PC-3 (cell line): ENCODE measurements at regions of chr15 and their contacts with region 1.

Region 1: DNA sequence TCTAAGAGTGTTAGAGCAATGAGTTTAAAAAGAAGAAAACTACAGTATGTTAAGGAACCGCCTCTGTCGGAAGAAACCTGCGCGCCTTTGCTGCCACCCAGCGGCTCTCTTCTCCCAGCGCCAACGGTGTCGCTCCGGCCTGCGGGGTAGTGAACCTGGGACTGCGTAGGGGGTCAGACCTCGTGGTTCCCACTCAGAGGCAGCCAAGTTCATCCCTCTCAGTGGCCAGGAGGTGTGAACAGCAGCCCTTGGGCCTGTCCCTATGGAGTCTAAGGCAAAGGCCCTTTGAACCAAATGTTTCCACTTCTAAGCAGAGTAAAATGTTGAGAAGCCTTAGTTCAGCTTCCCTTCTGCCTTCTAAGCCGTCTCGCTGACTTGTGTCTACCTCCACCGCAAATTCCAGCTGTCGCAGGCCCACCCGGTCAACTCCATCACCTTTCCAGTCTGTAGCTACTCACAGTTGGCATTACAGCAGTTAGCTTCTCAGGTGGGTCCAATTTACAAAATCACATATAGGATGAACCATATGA is 980 bp upstream of the RAB27A start:
- DNase-seq: peak; percentile 73
- ATAC-seq: peak; percentile 87
- H3K4me3 ChIP-seq: peak overlapping the region; percentile 98
- H3K27ac ChIP-seq: peak overlapping the region; percentile 45
- H3K4me1 ChIP-seq: peaks cover 10% of the 10 kb centered on the region; the same call in 1 of the 2 replicates
- H3K27me3 ChIP-seq: no peaks in the 10 kb centered on the region
- CTCF ChIP-seq: peak; percentile 88

Region 2: DNA sequence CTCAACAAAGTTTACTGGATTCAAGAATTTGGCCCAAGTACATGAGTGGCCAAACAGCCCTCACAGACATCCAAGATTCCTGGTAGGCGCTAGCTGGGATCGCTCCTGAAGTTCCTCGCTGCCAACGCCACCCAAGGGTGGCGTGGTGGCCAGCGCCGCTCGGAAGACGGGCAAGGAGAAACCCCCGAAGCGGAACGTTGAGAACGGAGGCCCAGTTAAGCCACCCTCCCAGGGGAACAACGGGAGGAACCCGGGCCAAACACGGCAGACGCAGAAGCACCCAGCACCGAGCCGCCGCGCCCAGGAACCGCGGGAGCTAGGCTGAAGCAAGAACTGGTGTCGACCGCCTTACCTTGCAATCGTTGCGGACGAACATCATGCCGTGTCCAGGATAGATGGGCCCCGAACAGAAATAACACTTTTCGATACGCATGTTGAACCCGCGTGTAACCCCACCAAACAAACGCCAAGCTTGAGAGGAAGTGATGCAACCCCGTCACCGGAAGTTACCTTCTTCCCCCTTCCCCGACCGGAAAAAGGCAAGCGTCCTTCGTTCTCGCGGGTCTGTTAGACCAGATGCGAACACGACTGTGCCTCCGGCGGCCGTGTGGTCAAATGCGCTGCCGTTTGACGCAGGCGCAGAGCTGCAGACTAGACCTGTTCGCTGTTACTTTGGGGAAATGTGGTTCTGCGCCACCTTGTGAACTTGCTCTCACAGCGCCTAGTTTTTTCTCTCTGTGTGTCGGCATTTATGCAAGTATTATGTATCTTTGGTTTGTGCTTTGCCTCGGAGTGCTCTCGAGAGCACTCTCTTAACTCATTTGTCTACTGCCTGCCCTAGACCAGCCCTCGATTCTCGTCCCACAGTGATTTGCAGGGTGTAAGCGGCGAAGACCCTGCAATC is 93.9 kb before region 1 on chr15 and contains the start of gene RSL24D1:
- CTCF ChIA-PET with region 1: no interaction called
- POLR2A ChIA-PET with region 1: no interaction called
- intact Hi-C with region 1: loop called (anchors 5 kb)
- DNase-seq: peak; percentile 96
- ATAC-seq: peak; percentile 96
- H3K4me3 ChIP-seq: peak within 1 kb of the TSS; percentile 91
- H3K27ac ChIP-seq: peak within 1 kb of the TSS; percentile 74
- H3K4me1 ChIP-seq: peaks cover 24% of the 10 kb centered on the region
- H3K27me3 ChIP-seq: no peaks in the 10 kb centered on the region
- CTCF ChIP-seq: peak; percentile 56
- total RNA-seq, gene RSL24D1: 37.0 and 43.5 TPM in 2 replicates

Region 3: GRCh38 chr15:55221090-55222011 is 69.2 kb before region 1 on chr15:
- CTCF ChIA-PET with region 1: interaction called, 4 read pairs
- POLR2A ChIA-PET with region 1: no interaction called
- intact Hi-C with region 1: loop called (anchors 1 kb)
- DNase-seq: peak; percentile 48
- ATAC-seq: no peak
- H3K4me3 ChIP-seq: no peak overlapping the region
- H3K27ac ChIP-seq: no peak overlapping the region
- H3K4me1 ChIP-seq: peaks cover 8% of the 10 kb centered on the region; the same call in 1 of the 2 replicates
- H3K27me3 ChIP-seq: no peaks in the 10 kb centered on the region
- CTCF ChIP-seq: no peak

Region 4: DNA sequence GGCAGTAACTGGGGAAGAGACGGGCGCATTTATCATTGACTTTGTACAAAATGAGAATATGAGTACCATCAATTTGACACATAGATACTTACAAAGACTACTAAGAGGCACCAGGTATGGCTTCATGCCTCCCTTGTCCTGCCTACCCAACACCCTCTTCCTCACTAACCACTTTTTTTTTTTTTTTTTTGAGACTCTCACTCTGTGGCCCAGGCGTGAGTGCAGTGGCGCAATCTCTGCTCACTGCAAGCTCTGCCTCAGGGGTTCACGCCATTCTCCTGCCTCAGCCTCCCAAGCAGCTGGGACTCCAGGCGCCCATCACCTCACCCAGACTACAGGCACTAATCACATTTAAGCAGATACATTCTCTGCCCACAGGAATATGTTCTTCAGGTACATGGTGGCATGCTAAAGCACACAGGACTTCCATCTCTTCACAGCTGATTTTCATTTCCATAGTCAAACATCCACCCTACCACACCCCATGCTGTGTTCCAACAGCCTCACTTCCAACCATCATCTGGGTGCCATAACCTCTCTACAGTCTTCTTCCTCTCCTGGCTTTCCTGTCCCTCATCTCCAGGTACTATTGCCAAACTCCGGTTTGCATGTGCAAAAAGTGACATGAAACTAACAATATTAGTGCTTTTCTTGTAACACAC is 42.7 kb before region 1 on chr15:
- CTCF ChIA-PET with region 1: no interaction called
- POLR2A ChIA-PET with region 1: no interaction called
- intact Hi-C with region 1: loop called (anchors 2 kb)
- DNase-seq: no peak
- ATAC-seq: no peak
- H3K4me3 ChIP-seq: no peak overlapping the region
- H3K27ac ChIP-seq: no peak overlapping the region
- H3K4me1 ChIP-seq: peaks cover 15% of the 10 kb centered on the region
- H3K27me3 ChIP-seq: no peaks in the 10 kb centered on the region
- CTCF ChIP-seq: no peak

Region 5: DNA sequence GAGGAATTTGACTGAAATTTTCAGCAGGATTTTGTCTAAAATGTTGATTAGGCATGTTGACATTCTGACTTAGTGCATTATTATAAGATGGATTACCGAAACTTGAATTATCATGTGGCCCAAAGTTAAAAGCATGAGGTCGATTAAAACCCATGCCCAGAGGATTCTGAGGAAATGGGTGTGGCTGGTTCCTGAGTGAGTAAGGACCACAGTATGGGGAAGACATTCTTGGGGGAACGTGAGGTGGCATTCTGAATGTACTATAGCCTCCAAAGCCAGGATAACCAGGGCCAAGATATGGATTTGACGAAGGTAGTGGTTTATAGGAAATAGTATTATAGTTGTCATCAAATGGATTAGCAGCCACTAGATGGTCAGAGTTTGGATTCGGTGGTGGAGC is 256.1 kb after region 1 on chr15:
- CTCF ChIA-PET with region 1: no interaction called
- POLR2A ChIA-PET with region 1: no interaction called
- intact Hi-C with region 1: no loop called
- DNase-seq: peak; percentile 48
- ATAC-seq: no peak
- H3K4me3 ChIP-seq: no peak overlapping the region
- H3K27ac ChIP-seq: no peak overlapping the region
- H3K4me1 ChIP-seq: peaks cover 7% of the 10 kb centered on the region
- H3K27me3 ChIP-seq: no peaks in the 10 kb centered on the region
- CTCF ChIP-seq: no peak